ENCODE measurements at regions of chr4 and their contacts with region 1.

Region 1: GRCh38 chr4:2843263-2843940 is at the start of gene ADD1:
- DNase-seq: peak; percentile 93 to 97 (median 93)
- ATAC-seq: peak; percentile 98 to 99 (median 98)
- H3K4me3 ChIP-seq: peak within 1 kb of the TSS; percentile 60 to 98 (median 80)
- H3K27ac ChIP-seq: peak within 1 kb of the TSS; percentile 86 to 98 (median 96)
- H3K4me1 ChIP-seq: peaks cover 0 to 65% (median 36%) of the 10 kb centered on the region in 12 donors
- H3K27me3 ChIP-seq: no peaks in the 10 kb centered on the region
- CTCF ChIP-seq: no peak
- POLR2A ChIP-seq: peak; percentile 83 to 97
- total RNA-seq, gene ADD1: 179 to 275 (median 215) TPM

Region 2: DNA sequence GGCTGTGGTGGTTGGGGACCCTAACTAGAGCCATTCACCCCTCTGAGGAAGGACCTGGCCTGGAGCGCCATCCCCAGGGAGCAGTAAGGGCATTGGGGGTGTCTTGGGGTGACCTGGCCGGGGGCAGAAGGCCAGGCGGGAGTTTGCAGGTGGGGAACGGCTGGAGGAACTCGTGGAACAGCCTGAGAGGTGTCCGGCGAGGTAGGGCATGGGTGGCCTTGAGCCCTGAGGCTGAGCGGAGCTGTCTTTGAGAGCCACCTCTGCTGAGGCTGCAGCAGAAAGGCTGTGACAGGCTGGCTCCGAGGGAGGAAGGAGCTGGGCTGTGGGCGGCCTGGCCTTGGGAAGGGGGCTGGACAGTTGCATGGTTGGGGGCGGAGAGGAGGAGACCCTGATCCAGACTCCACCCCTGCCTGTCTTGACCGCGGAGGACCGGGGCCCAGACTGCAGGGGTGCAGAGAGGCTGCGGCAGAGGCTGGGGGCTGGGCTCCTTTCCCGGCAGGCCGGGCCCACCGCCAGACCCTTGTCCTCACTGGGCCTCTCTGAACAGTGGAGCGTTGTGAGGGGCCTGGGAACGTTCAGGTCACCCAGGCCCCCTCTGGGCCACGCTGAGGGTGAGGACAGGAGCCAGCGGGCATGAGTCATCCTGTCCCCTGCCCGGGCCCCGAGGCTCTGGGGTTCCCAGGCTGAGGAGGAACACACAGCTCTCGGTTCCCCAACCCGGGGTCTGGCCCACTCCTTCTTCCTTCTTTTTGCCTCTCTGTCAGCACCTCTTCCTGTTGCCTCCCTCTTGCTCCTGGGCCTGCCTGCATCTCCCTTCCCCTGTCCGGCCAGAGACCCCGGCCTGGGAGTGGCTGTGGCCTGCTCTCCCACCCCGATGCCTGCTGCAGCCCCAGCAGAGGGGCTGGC is 42.5 kb before region 1 on chr4:
- intact Hi-C with region 1: loop called in 2 of 10 experiments (anchors 5 kb)
- DNase-seq: peak; percentile 81 to 93 (median 89)
- ATAC-seq: peak; percentile 72 to 81 (median 74)
- H3K4me3 ChIP-seq: peak overlapping the region in 9 of 12 donors; percentile 12 to 60 (median 33)
- H3K27ac ChIP-seq: peak overlapping the region; percentile 76 to 96 (median 88)
- H3K4me1 ChIP-seq: peaks cover 55 to 98% (median 92%) of the 10 kb centered on the region in 12 donors
- H3K27me3 ChIP-seq: no peaks in the 10 kb centered on the region
- CTCF ChIP-seq: no peak
- POLR2A ChIP-seq: peak in 1 of 2 donors; percentile 36

Region 3: GRCh38 chr4:2806390-2807290 is 36.8 kb before region 1 on chr4:
- intact Hi-C with region 1: loop called in 2 of 10 experiments (anchors 5 kb)
- DNase-seq: peak; percentile 71 to 88 (median 82)
- ATAC-seq: peak; percentile 35 to 66 (median 52)
- H3K4me3 ChIP-seq: peak overlapping the region in 1 of 12 donors; percentile 12
- H3K27ac ChIP-seq: peak overlapping the region; percentile 59 to 86 (median 80)
- H3K4me1 ChIP-seq: peaks cover 35 to 93% (median 86%) of the 10 kb centered on the region in 12 donors
- H3K27me3 ChIP-seq: no peaks in the 10 kb centered on the region
- CTCF ChIP-seq: no peak
- POLR2A ChIP-seq: no peak

Region 4: DNA sequence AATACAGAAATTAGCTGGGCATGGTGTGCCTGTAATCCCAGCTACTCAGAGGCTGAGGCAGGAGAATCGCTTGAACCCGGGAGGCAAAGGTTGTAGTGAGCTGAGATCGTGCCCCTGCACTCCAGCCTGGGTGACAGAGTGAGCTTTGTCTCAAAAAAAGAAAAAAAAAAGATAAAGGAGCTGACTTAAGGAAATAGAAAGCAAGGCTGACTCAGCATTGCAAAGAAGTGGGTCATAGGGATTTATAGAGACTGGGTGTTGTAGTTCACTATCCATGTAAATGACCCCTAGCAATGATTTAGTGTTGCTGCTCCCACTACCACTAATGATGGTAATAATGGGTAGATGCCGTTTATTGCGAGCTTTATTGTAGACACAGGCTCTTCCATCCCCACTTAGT is 47.9 kb after region 1 on chr4:
- intact Hi-C with region 1: loop called in 3 of 10 experiments (anchors 2 to 5 kb)
- DNase-seq: no peak
- ATAC-seq: no peak
- H3K4me3 ChIP-seq: no peak overlapping the region
- H3K27ac ChIP-seq: peak overlapping the region in 1 of 12 donors; percentile 22
- H3K4me1 ChIP-seq: peaks cover 0 to 50% (median 27%) of the 10 kb centered on the region in 12 donors
- H3K27me3 ChIP-seq: no peaks in the 10 kb centered on the region
- CTCF ChIP-seq: no peak
- POLR2A ChIP-seq: no peak

Region 5: DNA sequence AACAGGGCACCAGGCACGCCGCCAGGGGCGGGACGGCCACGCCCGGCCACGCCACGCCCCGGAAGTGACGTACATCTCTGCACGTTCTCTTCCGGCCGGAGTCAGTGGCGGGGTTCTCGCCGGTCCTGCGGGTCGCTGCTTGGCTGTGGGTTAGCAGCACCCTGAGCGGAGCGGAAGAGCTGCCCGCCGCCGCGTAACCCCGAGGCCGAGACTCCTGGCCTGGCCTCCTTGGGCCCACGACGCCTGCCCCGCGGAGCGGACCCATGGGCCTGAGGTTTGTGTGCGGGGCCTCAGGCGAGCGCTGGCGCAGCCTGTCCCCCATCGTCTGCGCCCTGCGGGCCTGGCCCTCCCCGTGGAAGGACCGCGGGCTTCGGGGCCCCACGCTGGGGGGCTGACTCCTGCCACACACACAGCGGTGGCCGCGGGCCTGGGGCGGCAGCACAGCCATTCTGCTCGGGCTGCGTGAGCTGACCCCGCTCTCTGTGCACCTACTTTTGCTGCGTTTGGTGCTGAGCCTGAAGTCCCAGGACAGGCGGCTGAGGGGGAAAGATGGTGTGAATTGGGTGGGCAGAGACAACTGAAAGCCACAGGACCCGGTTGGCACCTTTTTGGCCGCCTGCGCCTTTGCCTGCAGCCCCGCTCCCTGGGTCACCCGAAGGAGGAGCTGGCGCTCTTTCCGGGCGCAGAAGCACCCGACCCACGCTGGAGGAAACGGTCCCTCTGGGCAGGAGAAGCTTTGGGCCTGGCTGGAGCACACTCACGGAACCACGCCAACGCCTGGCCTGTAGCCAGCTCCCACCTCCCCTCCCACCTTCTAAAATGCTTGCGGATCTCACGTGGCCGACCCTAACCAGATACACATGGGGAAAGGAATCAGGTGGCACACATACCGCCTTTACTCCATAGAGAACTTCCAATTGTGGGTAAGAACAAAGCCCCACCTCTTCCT is 91.7 kb after region 1 on chr4:
- intact Hi-C with region 1: loop called in 4 of 10 experiments (anchors 5 to 10 kb)
- DNase-seq: peak; percentile 94 to 98 (median 96)
- ATAC-seq: peak; percentile 54 to 84 (median 83)
- H3K4me3 ChIP-seq: peak overlapping the region; percentile 76 to 100 (median 89)
- H3K27ac ChIP-seq: peak overlapping the region; percentile 68 to 96 (median 88)
- H3K4me1 ChIP-seq: peaks cover 2 to 63% (median 42%) of the 10 kb centered on the region in 12 donors
- H3K27me3 ChIP-seq: no peaks in the 10 kb centered on the region
- CTCF ChIP-seq: peak in 2 of 12 donors; percentile 1 to 26
- POLR2A ChIP-seq: peak; percentile 24 to 92

Measured in heart left ventricle (tissue), 16 donors.